ENCODE measurements at regions of chr4 and their contacts with region 1.

Region 1: GRCh38 chr4:6986781-6987587 is 56.2 kb upstream of the TADA2B start:
- DNase-seq: peak; percentile 96
- H3K4me3 Mint-ChIP-seq: peak overlapping the region; percentile 97
- H3K27ac Mint-ChIP-seq: peak overlapping the region; percentile 92
- H3K4me1 Mint-ChIP-seq: peaks cover 76% of the 10 kb centered on the region
- H3K27me3 Mint-ChIP-seq: no peaks in the 10 kb centered on the region

Region 2: DNA sequence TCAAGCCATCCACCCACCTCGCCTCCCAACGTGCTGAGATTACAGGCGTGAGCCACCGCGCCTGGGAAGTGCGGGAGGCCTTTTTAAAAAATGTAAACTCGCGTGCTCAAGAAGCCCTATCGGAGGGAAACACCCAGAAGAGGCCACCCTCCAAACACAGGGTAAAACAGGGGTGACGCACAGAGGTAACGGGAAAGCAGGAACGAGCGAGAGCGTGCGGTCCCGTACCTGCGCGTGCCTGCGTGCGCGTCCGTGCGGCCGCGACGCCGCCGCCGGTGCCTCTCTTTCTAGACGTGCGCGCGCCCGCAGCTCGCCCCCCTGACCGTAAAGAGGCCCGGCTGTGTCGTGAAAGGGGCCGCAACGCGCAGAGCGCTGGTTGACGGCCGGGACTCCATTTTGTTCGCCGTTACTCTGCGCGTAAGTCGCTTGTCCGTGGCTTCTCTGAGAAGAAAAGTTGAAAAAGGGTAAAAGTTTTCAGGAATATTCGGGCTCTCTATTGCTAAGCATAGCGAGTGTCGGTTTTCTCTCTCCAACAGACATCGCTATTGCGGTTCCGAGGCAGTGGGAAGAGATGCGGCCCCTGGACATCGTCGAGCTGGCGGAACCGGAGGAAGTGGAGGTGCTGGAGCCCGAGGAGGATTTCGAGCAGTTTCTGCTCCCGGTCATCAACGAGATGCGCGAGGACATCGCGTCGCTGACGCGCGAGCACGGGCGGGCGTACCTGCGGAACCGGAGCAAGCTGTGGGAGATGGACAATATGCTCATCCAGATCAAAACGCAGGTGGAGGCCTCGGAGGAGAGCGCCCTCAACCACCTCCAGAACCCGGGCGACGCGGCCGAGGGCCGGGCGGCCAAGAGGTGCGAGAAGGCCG is 346.5 kb before region 1 on chr4 and contains the start of gene MRFAP1:
- CTCF ChIA-PET with region 1: no interaction called
- POLR2A ChIA-PET with region 1: no interaction called
- intact Hi-C with region 1: loop called (anchors 2 kb)
- DNase-seq: peak; percentile 97
- H3K4me3 Mint-ChIP-seq: peak within 1 kb of the TSS; percentile 100
- H3K27ac Mint-ChIP-seq: peak within 1 kb of the TSS; percentile 99
- H3K4me1 Mint-ChIP-seq: peaks cover 29% of the 10 kb centered on the region
- H3K27me3 Mint-ChIP-seq: no peaks in the 10 kb centered on the region
- total RNA-seq, gene MRFAP1: 122 to 130 TPM

Region 3: DNA sequence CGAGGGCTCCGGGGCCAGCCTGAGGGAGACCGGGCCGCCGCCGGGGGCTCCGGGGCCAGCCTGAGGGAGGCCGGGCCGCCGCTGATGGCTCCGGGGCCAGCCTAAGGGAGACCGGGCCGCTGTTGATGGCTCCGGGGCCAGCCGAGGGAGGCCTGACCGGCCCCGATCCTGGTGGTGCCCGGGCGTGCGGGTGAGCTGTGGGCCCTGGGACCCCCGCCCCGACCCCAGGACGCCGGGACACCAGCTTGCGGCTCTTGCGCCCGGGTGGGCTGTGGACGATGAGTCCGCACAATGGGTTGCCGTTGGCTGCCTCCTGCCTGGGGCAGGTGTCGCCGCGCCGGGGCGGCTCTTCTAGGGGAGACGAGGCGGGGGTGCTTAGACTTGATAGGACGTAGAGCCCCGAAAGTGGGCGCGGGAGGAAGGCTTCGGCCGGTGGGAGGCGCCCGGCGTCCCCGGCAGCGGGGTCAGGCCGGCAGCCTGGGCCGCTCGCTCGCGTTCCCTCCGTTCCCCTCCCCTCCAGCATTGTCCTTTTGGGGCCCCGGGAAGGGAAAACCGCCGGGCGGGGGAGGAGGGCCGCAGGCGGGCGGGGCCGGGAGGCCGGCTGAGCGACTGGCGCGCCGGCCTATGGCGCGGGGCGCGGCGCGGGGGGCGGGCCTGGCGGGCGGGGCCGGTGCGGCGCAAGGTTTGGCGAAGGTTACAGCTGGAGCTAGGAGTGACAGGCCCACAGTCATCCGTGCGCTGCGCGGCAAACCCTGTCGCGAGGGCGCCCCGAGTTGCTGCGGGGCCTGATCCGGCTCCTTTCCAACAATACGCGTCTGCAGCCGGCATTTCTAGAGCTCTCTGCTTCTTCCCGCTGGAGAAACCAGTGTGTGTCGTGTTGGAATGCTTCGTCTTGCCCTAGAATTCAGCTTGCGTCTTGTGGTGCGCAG is 203.7 kb before region 1 on chr4:
- CTCF ChIA-PET with region 1: no interaction called
- POLR2A ChIA-PET with region 1: no interaction called
- intact Hi-C with region 1: loop called (anchors 2 kb)
- DNase-seq: peak; percentile 94
- H3K4me3 Mint-ChIP-seq: peak overlapping the region; percentile 80
- H3K27ac Mint-ChIP-seq: peak overlapping the region; percentile 77
- H3K4me1 Mint-ChIP-seq: peaks cover 47% of the 10 kb centered on the region
- H3K27me3 Mint-ChIP-seq: no peaks in the 10 kb centered on the region

Region 4: GRCh38 chr4:6917461-6918271 is 69.3 kb before region 1 on chr4:
- CTCF ChIA-PET with region 1: interaction called, 5 read pairs
- POLR2A ChIA-PET with region 1: no interaction called
- intact Hi-C with region 1: loop called (anchors 2 kb)
- DNase-seq: peak; percentile 62
- H3K4me3 Mint-ChIP-seq: peak overlapping the region; percentile 48
- H3K27ac Mint-ChIP-seq: peak overlapping the region; percentile 91
- H3K4me1 Mint-ChIP-seq: peaks cover 77% of the 10 kb centered on the region
- H3K27me3 Mint-ChIP-seq: no peaks in the 10 kb centered on the region

Region 5: GRCh38 chr4:6974138-6974848 is 12.7 kb before region 1 on chr4:
- CTCF ChIA-PET with region 1: interaction called, 25 read pairs
- POLR2A ChIA-PET with region 1: interaction called, 5 read pairs
- intact Hi-C with region 1: loop called (anchors 1 kb)
- DNase-seq: peak; percentile 90
- H3K4me3 Mint-ChIP-seq: no peak overlapping the region
- H3K27ac Mint-ChIP-seq: peak overlapping the region; percentile 51
- H3K4me1 Mint-ChIP-seq: peaks cover 8% of the 10 kb centered on the region
- H3K27me3 Mint-ChIP-seq: no peaks in the 10 kb centered on the region